Dorsolateral prefrontal cortex (tissue), 120 donors: ENCODE measurements at regions of chr13 and their contacts with region 1.

Region 1: DNA sequence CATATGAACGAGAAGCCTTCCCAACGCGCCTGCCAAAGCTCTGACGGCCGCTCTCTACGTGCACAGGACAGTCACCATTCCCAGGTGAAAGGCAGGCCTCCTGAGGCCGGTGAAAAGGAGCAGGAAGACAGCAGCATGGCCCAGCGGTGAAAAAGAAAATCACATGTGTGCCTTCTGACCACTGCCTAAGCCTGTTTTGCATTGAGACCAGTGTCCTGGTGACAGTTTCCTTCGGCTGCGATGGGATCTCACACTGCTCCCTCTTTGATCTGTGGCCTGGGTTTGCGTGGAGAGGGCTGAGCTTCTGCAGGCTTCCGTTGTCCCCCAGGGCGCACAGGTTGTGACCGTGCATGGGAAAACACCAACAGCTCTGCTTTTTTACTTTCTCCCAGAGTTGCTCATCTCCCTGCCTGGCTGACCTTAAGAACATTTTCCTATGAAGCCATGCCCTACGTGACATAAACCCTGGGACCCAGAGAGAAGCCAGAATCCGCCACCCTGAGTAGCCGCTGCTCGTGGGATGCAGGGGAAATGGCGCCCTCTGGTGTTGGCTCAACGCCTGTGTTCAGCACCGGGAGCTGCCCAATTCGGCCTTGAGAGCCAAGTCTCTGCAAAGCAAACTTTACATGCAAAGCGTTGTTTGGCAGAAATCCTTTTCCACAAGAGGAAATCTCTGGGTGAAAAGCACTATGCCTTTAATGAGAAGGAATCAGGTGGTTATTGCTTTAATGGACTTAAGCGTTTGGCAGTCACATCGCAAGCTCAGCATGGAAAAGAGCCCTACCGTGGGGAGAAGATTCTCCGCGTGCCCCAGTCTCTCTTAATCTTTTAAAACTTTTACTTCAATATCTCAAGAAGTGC is 112.2 kb upstream of the GPR12 start:
- DNase-seq: peak; percentile 57 to 84 (median 75)
- H3K4me3 ChIP-seq: no peak overlapping the region
- H3K27ac ChIP-seq: no peak overlapping the region
- H3K27me3 ChIP-seq: peaks cover 0 to 10% (median 0%) of the 10 kb centered on the region in 45 donors
- CTCF ChIP-seq: peak; percentile 52 to 97 (median 88)

Region 2: DNA sequence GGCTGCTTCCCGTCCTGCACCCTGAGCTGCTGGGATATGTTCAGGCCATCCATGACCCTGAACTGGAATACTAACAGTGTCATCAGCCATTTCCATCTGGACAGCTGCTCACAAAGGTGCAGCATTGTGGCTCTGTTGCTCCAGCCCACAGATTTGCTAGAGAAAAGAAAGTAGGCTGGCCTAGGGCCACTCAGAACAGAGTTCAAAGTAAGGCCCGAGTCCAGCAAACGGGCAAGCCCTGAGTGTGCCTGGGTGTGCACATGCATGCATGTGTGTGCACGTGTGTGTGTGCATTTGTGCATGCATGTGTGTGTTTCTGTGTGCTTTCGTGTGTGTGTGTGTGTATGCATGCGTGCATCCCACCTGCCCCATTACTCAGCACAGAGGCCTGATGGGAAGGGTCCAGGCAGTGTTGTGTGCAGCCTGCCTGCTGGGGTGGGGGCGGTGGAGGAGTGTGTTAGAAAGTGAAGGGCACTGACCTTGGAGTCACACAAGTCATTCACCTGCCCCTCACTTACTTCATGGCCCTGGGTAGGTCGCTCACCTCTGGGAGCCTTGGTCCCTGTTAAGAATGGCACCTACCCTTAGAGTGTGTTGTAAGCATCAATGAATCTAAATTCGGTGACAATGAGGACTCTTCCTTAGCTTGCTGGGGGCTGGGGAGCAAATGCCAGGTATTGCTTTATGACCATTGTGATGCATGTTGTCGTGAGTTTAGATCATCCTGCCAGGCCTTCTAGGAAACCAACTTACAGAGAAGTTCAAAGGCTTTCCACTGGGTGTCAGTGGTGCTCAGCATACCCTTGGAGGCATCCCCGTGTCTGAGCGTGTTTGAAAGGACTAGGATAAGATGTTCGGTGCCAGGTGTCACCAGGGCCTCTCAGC is 165.4 kb before region 1 on chr13:
- intact Hi-C with region 1: loop called (anchors 1 to 2 kb)
- DNase-seq: peak in 7 of 10 donors; percentile 48 to 79 (median 60)
- H3K4me3 ChIP-seq: no peak overlapping the region
- H3K27ac ChIP-seq: no peak overlapping the region
- H3K27me3 ChIP-seq: no peaks in the 10 kb centered on the region
- CTCF ChIP-seq: peak; percentile 37 to 88 (median 78)

Region 3: GRCh38 chr13:26759907-26760834 is 112.6 kb before region 1 on chr13 and contains the start of gene GPR12:
- intact Hi-C with region 1: loop called in 1 of 2 experiments (anchors 5 kb)
- DNase-seq: peak in 5 of 10 donors; percentile 15 to 47 (median 32)
- H3K4me3 ChIP-seq: peak within 1 kb of the TSS; percentile 41 to 83 (median 66)
- H3K27ac ChIP-seq: peak within 1 kb of the TSS in 52 of 59 donors; percentile 9 to 85 (median 64)
- H3K27me3 ChIP-seq: peaks cover 0 to 15% (median 0%) of the 10 kb centered on the region in 45 donors
- CTCF ChIP-seq: no peak
- total RNA-seq, gene GPR12: 6.1 to 27.7 (median 17.8) TPM

Region 4: DNA sequence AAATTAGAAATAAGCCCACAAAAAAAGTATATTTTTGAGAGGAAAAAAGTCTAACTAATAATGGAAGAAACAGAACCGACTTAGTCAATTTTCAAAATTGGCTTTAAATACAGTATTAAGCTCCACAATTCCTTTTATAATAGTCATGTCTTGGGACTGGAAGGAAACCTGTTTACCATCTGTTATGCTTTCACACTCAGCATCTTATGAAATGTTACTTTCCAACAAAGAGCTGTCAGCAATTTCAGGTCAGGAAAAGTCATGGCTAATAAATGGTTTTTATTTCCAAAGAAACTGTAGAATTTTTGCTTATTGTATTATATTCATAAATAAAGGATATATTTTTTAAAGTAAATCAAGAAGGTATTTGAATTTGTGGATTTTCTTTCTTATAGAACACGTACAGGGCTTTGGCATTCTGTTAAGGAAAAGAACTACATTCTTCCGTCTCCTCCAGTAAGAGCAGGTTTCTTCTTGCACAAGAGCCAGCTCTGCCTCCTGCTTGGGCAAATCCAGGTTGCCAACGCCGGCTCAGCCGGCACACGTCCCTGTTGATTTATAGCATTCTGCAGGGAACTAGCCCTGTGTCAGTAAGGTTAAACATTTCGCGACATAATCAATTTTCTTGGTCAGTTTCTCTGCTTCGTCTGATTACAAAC is 59.3 kb before region 1 on chr13:
- intact Hi-C with region 1: loop called in 1 of 2 experiments (anchors 5 kb)
- DNase-seq: peak in 1 of 10 donors; percentile 37
- H3K4me3 ChIP-seq: no peak overlapping the region
- H3K27ac ChIP-seq: no peak overlapping the region
- H3K27me3 ChIP-seq: peaks cover 0 to 1% (median 0%) of the 10 kb centered on the region in 45 donors
- CTCF ChIP-seq: no peak

Region 5: GRCh38 chr13:26929971-26930730 is 57.4 kb after region 1 on chr13:
- intact Hi-C with region 1: loop called in 1 of 2 experiments (anchors 2 kb)
- DNase-seq: peak; percentile 67 to 84 (median 78)
- H3K4me3 ChIP-seq: peak overlapping the region in 39 of 59 donors; percentile 4 to 56 (median 36)
- H3K27ac ChIP-seq: peak overlapping the region in 8 of 59 donors; percentile 9 to 65 (median 48)
- H3K27me3 ChIP-seq: peaks cover 0 to 2% (median 0%) of the 10 kb centered on the region in 45 donors
- CTCF ChIP-seq: peak; percentile 71 to 99 (median 97)

Region 6: GRCh38 chr13:27130979-27131623 is 258.3 kb after region 1 on chr13:
- intact Hi-C with region 1: no loop called
- DNase-seq: no peak
- H3K4me3 ChIP-seq: no peak overlapping the region
- H3K27ac ChIP-seq: no peak overlapping the region
- H3K27me3 ChIP-seq: no peaks in the 10 kb centered on the region
- CTCF ChIP-seq: no peak